HEK293 (cell line): ENCODE measurements at regions of chr18 and their contacts with region 1.

Region 1: GRCh38 chr18:7177116-7177744 is 53.7 kb upstream of the LRRC30 start:
- H3K4me3 ChIP-seq: no peak overlapping the region
- H3K27ac ChIP-seq: no peak overlapping the region
- H3K4me1 ChIP-seq: no peaks in the 10 kb centered on the region
- CTCF ChIP-seq: peak; percentile 44; the same call in 1 of the 2 replicates

Region 2: DNA sequence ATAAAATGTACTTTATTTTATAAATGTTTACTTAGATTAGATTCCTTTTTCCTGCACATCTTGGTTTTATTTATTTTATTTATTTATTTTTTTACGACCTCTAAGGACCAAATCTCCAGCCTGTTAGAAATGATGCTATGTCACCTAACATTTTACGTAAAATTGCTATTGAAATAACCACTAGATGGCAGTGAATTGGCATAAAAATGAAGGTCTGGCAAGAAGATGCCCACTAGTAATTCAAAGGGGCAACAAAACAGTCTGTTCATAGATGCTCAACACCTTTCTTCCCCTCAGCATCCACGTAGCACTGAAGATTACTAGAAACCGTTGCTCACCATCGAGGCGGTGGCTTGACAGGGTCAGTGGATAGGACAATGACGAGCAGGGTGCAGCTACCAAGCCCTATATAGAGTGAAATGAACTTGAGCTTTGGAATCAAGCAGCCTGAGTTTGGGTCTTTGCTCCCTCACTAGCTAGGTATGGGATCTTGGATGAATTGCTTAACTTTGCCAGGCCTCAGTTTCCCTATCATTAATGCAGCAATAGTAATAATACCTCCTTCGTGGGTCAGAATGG is 633.8 kb before region 1 on chr18:
- CTCF ChIA-PET with region 1: interaction called, 12 read pairs
- POLR2A ChIA-PET with region 1: no interaction called
- H3K4me3 ChIP-seq: no peak overlapping the region
- H3K27ac ChIP-seq: no peak overlapping the region
- H3K4me1 ChIP-seq: no peaks in the 10 kb centered on the region; the same call in 1 of the 2 replicates
- CTCF ChIP-seq: peak; percentile 52; the same call in 1 of the 2 replicates

Region 3: GRCh38 chr18:6885992-6886796 is 291.0 kb before region 1 on chr18:
- CTCF ChIA-PET with region 1: interaction called, 11 read pairs
- POLR2A ChIA-PET with region 1: no interaction called
- H3K4me3 ChIP-seq: no peak overlapping the region
- H3K27ac ChIP-seq: no peak overlapping the region
- H3K4me1 ChIP-seq: no peaks in the 10 kb centered on the region
- CTCF ChIP-seq: peak; percentile 51

Region 4: DNA sequence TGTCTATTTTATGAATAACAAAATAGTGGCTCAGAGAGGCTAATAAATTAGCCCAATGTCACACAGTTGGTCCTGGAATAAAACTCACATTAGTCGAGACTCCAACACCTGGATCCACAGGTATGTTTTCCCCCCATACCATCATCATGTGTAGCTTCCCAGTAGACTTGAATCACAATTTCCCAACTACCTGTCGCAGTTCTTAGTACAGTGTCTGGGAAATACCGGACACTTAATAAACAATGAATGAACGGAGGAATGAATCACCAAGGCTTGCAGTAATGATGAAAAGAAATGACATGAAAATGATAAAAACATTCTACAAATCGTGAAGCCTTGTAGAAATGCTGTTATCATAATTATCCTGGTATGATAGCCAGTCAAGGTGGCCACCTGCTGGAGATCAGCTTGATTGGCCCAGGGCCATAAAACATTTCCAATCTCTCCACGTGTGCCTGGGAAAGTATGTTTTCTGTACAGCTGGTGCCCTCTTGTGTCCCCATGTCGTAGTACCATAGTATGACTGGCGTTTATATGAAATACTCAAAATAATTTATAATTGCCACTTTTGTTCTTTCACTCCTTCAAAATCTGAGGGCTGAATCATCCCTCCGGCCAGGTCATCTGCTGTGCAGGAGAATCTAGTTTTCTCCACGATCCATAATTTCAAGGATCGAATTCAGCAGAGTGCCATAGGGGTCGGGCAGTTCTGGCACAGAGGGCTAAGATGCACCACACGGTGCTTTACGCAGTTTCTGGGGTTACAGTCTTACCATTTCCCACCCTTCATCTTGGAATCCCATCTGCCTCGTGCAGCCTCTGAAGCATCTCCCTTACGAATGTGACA is 155.0 kb before region 1 on chr18:
- CTCF ChIA-PET with region 1: interaction called, 17 read pairs
- POLR2A ChIA-PET with region 1: no interaction called
- H3K4me3 ChIP-seq: no peak overlapping the region
- H3K27ac ChIP-seq: no peak overlapping the region
- H3K4me1 ChIP-seq: no peaks in the 10 kb centered on the region
- CTCF ChIP-seq: peak; percentile 82

Region 5: DNA sequence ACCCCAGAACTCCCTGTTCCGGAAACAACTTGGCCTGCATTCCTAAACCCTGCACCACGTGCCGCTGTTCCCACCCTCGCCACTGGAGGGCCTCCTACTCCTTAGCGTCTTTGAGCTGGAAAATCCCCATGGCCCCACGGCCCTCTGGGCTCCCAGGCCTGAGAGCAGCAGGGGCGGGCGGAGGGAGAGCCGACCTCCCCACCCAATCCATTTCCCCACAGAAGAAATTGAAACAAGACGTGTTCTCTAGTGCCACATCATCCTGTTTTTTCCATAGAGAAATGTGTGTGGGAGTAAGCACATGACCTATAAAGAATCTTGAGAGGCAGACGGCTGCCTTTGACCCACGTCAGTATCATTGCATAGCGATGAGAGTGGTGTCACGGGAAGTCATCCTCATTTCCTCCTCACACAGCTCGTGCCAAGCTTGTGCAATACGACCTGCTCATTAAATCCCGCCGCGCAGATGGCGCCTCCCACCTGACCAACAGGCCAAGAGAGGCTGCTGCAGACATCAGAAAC is 138.8 kb before region 1 on chr18:
- CTCF ChIA-PET with region 1: interaction called, 164 read pairs
- POLR2A ChIA-PET with region 1: interaction called, 12 read pairs
- H3K4me3 ChIP-seq: peak overlapping the region; percentile 2; the same call in 1 of the 2 replicates
- H3K27ac ChIP-seq: peak overlapping the region; percentile 28; the same call in 1 of the 2 replicates
- H3K4me1 ChIP-seq: no peaks in the 10 kb centered on the region; the same call in 1 of the 2 replicates
- CTCF ChIP-seq: peak; percentile 60; the same call in 1 of the 2 replicates

Region 6: GRCh38 chr18:7164323-7165004 is 12.8 kb before region 1 on chr18:
- CTCF ChIA-PET with region 1: interaction called, 33 read pairs
- POLR2A ChIA-PET with region 1: no interaction called
- H3K4me3 ChIP-seq: no peak overlapping the region
- H3K27ac ChIP-seq: no peak overlapping the region
- H3K4me1 ChIP-seq: no peaks in the 10 kb centered on the region
- CTCF ChIP-seq: no peak

Region 7: DNA sequence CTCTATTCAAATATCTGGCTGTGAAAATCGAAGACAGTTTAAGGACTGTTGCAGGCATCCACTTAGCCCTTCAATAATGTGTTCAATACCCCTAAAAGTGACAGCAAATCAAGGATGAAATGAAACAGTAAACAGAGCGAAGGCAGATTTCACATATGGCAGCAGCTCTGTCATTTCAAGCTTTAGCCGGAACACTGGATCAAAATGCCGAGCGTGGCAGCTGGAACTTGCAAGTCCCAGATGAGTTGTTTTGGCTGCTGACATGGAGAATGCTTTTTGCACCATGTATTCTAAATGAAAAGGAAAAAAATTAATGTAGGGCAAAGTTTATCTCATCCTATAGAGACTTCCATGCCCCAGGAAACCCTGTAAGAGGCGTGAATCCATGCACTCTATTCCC is 71.6 kb after region 1 on chr18:
- CTCF ChIA-PET with region 1: no interaction called
- POLR2A ChIA-PET with region 1: no interaction called
- H3K4me3 ChIP-seq: no peak overlapping the region
- H3K27ac ChIP-seq: no peak overlapping the region
- H3K4me1 ChIP-seq: no peaks in the 10 kb centered on the region
- CTCF ChIP-seq: no peak

Region 8: GRCh38 chr18:7259475-7260081 is 82.3 kb after region 1 on chr18:
- CTCF ChIA-PET with region 1: no interaction called
- POLR2A ChIA-PET with region 1: no interaction called
- H3K4me3 ChIP-seq: no peak overlapping the region
- H3K27ac ChIP-seq: no peak overlapping the region
- H3K4me1 ChIP-seq: no peaks in the 10 kb centered on the region
- CTCF ChIP-seq: no peak